ENCODE measurements at regions of chr12 and their contacts with region 1.

Region 1: GRCh38 chr12:48851883-48852733 is at the start of gene DDX23:
- DNase-seq: peak; percentile 95
- H3K4me3 Mint-ChIP-seq: peak within 1 kb of the TSS; percentile 97
- H3K27ac Mint-ChIP-seq: peak within 1 kb of the TSS; percentile 95
- H3K4me1 Mint-ChIP-seq: peaks cover 36% of the 10 kb centered on the region
- H3K27me3 Mint-ChIP-seq: no peaks in the 10 kb centered on the region
- total RNA-seq, gene DDX23: 143 to 144 TPM

Region 2: GRCh38 chr12:48814262-48815125 is 37.6 kb before region 1 on chr12:
- CTCF ChIA-PET with region 1: interaction called, 27 read pairs
- POLR2A ChIA-PET with region 1: interaction called, 4 read pairs
- DNase-seq: peak; percentile 70
- H3K4me3 Mint-ChIP-seq: peak overlapping the region; percentile 84
- H3K27ac Mint-ChIP-seq: peak overlapping the region; percentile 85
- H3K4me1 Mint-ChIP-seq: peaks cover 37% of the 10 kb centered on the region
- H3K27me3 Mint-ChIP-seq: peaks cover 17% of the 10 kb centered on the region

Region 3: GRCh38 chr12:48865434-48866290 is 13.6 kb after region 1 on chr12 and contains the start of gene RND1:
- CTCF ChIA-PET with region 1: interaction called, 63 read pairs
- POLR2A ChIA-PET with region 1: interaction called, 5 read pairs
- DNase-seq: peak; percentile 88
- H3K4me3 Mint-ChIP-seq: peak within 1 kb of the TSS; percentile 86
- H3K27ac Mint-ChIP-seq: peak within 1 kb of the TSS; percentile 89
- H3K4me1 Mint-ChIP-seq: peaks cover 25% of the 10 kb centered on the region
- H3K27me3 Mint-ChIP-seq: peaks cover 27% of the 10 kb centered on the region
- total RNA-seq, gene RND1: 1.1 to 1.2 TPM

Region 4: DNA sequence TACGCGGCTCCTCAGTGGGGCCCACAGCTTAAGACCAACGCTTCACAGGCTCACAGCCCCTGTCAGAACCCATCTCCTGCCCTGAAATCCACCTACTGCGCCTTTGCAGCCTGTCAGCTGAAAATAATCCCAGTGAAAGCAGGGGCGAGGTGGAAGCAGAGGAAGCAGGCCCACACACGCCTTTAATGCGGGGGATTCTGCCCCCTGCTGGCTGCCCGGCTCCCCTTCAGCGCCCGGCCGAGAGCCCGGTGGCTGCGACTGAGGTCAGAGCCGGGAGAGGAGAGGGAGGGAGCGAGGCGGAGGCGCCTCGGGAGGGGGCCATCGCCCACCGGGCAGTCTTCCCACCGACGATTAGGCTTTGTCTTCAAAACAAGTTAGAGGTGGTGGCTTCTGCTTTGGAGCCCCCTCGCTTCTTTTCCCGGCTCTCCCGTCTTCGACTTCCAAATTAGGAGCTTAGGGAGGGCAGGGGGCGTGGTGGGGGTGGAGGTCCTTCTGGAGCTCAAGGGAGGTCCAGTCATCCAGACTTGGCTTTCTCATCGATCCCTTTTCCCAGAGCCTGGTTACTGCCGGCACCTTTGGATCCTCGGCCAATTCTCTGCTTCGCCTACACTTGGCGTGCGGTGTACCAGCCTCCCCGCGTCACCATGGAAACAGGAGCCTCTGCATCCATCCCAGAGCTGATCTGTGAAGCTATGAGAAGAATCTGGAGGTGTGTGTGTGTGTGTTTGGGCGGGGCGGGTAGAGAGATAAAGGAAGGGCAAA is 38.7 kb after region 1 on chr12:
- CTCF ChIA-PET with region 1: interaction called, 53 read pairs
- POLR2A ChIA-PET with region 1: no interaction called
- DNase-seq: peak; percentile 72
- H3K4me3 Mint-ChIP-seq: no peak overlapping the region
- H3K27ac Mint-ChIP-seq: no peak overlapping the region
- H3K4me1 Mint-ChIP-seq: peaks cover 9% of the 10 kb centered on the region
- H3K27me3 Mint-ChIP-seq: peaks cover 20% of the 10 kb centered on the region

Region 5: GRCh38 chr12:48977315-48978281 is 125.5 kb after region 1 on chr12:
- CTCF ChIA-PET with region 1: interaction called, 27 read pairs
- POLR2A ChIA-PET with region 1: no interaction called
- DNase-seq: peak; percentile 74
- H3K4me3 Mint-ChIP-seq: peak overlapping the region; percentile 22
- H3K27ac Mint-ChIP-seq: no peak overlapping the region
- H3K4me1 Mint-ChIP-seq: peaks cover 52% of the 10 kb centered on the region
- H3K27me3 Mint-ChIP-seq: peaks cover 92% of the 10 kb centered on the region